Caco-2 (cell line): ENCODE measurements at regions of chr7 and their contacts with region 1.

Region 1: GRCh38 chr7:158704704-158705468 is at the start of gene NCAPG2:
- DNase-seq: peak; percentile 98
- H3K4me3 ChIP-seq: peak within 1 kb of the TSS; percentile 99
- H3K4me3 Mint-ChIP-seq: peak within 1 kb of the TSS; percentile 87
- H3K27ac Mint-ChIP-seq: peak within 1 kb of the TSS; percentile 88
- H3K4me1 ChIP-seq: peaks cover 12% of the 10 kb centered on the region
- H3K4me1 Mint-ChIP-seq: peaks cover 24% of the 10 kb centered on the region
- H3K27me3 ChIP-seq: no peaks in the 10 kb centered on the region
- H3K27me3 Mint-ChIP-seq: no peaks in the 10 kb centered on the region
- CTCF ChIP-seq: peak; percentile 11 to 20
- total RNA-seq, gene NCAPG2: 67.3 and 67.6 TPM in 2 replicates

Region 2: GRCh38 chr7:158350166-158350900 is 354.6 kb before region 1 on chr7:
- CTCF ChIA-PET with region 1: no interaction called
- POLR2A ChIA-PET with region 1: no interaction called
- intact Hi-C with region 1: no loop called
- DNase-seq: no peak
- H3K4me3 ChIP-seq: no peak overlapping the region
- H3K4me3 Mint-ChIP-seq: no peak overlapping the region
- H3K27ac Mint-ChIP-seq: no peak overlapping the region
- H3K4me1 ChIP-seq: no peaks in the 10 kb centered on the region
- H3K4me1 Mint-ChIP-seq: no peaks in the 10 kb centered on the region
- H3K27me3 ChIP-seq: no peaks in the 10 kb centered on the region
- H3K27me3 Mint-ChIP-seq: no peaks in the 10 kb centered on the region
- CTCF ChIP-seq: no peak

Region 3: GRCh38 chr7:158689488-158689887 is 15.4 kb before region 1 on chr7:
- CTCF ChIA-PET with region 1: no interaction called
- POLR2A ChIA-PET with region 1: interaction called, 12 read pairs
- intact Hi-C with region 1: no loop called
- DNase-seq: no peak
- H3K4me3 ChIP-seq: no peak overlapping the region
- H3K4me3 Mint-ChIP-seq: no peak overlapping the region
- H3K27ac Mint-ChIP-seq: no peak overlapping the region
- H3K4me1 ChIP-seq: no peaks in the 10 kb centered on the region
- H3K4me1 Mint-ChIP-seq: no peaks in the 10 kb centered on the region
- H3K27me3 ChIP-seq: no peaks in the 10 kb centered on the region
- H3K27me3 Mint-ChIP-seq: no peaks in the 10 kb centered on the region
- CTCF ChIP-seq: no peak

Region 4: GRCh38 chr7:158796542-158797066 is 91.7 kb after region 1 on chr7:
- CTCF ChIA-PET with region 1: no interaction called
- POLR2A ChIA-PET with region 1: no interaction called
- intact Hi-C with region 1: no loop called
- DNase-seq: no peak
- H3K4me3 ChIP-seq: no peak overlapping the region
- H3K4me3 Mint-ChIP-seq: no peak overlapping the region
- H3K27ac Mint-ChIP-seq: no peak overlapping the region
- H3K4me1 ChIP-seq: peaks cover 3% of the 10 kb centered on the region
- H3K4me1 Mint-ChIP-seq: peaks cover 6% of the 10 kb centered on the region
- H3K27me3 ChIP-seq: no peaks in the 10 kb centered on the region
- H3K27me3 Mint-ChIP-seq: no peaks in the 10 kb centered on the region
- CTCF ChIP-seq: no peak

Region 5: DNA sequence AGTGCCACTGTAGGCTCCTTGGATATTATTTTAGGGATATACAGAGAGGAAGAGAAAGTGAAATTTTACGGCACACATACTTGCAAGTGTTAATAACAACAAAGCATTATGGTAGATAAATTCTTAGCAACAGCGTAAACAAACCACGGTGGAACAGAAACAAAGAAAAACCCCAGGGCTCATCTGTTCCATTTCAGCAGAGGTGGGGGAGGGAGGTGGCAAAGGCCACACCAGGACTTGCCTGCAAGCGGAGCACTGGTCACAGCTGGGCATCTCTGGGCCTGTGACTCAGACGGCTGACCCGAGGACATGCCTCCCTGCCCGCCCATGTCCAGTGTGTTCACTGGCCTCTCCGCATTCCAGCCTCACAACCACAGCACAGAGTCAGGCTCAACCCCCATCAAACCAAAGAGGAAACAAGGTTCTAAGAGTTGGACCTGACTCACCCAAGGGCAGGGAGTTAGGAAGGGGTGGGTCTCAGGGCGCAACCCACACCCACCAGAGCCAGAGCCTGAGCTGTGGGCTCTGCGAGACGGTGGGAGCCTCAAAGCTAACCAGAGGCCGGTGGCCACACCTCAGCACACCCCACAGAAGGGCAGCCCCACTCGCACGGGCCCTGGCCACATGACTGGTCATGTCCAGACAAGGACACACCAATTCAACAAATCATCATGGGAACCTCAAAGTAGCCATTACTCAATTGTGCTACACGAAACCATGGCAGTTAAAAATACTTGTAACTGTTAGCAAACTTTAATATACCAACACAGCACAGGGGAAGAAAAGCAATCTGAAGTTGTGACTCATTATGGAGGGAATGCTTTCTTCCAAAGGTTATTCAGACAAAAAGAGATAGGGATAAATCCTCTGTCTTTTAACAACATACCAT is 113.7 kb after region 1 on chr7:
- CTCF ChIA-PET with region 1: no interaction called
- POLR2A ChIA-PET with region 1: interaction called, 4 read pairs
- intact Hi-C with region 1: loop called (anchors 5 kb)
- DNase-seq: peak; percentile 89 to 93
- H3K4me3 ChIP-seq: peak overlapping the region; percentile 6; the same call in 1 of the 2 replicates
- H3K4me3 Mint-ChIP-seq: peak overlapping the region; percentile 55
- H3K27ac Mint-ChIP-seq: peak overlapping the region; percentile 94
- H3K4me1 ChIP-seq: peaks cover 70% of the 10 kb centered on the region
- H3K4me1 Mint-ChIP-seq: peaks cover 71% of the 10 kb centered on the region
- H3K27me3 ChIP-seq: no peaks in the 10 kb centered on the region
- H3K27me3 Mint-ChIP-seq: no peaks in the 10 kb centered on the region
- CTCF ChIP-seq: no peak

Region 6: DNA sequence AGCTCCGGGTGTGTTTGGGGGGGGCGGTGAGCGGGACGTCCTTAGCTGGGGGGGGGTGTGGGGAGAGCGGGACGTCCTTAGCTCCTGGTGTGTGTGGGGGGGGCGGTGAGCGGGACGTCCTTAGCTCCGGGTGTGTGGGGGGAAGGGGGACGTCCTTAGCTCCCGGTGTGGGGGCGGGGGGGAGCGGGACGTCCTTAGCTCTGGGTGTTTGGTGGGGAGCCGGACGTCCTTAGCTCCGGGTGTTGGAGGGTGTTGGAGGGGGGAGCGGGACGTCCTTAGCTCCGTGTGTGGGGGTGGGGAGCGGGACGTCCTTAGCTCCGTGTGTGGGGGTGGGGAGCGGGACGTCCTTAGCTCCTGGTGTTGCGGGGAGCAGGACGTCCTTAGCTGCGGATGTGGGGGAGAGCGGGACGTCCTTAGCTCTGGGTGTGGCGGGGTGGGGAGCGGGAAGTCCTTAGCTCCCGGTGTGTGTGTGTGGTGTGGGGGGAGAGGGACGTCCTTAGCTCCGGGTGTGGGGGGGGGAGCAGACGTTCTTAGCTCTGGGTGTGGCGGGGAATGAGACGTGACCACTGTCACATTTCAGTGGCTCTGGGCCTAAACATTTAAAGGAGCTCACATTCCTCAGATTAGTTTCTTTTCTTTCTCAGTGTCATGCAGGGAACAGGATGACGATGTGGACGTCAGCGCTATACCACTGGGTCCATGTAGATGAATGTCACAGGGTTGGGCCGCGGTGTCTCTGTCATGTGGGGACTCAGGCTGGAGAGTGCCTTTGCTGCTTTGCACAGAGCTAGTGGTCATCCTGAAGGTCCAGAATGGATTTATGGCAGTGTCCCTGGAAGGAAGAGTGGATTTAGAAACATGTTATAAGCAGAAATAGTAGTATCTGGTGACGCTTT is 159.0 kb after region 1 on chr7:
- CTCF ChIA-PET with region 1: no interaction called
- POLR2A ChIA-PET with region 1: interaction called, 7 read pairs
- intact Hi-C with region 1: loop called (anchors 10 kb)
- DNase-seq: peak; percentile 41 to 78
- H3K4me3 ChIP-seq: peak overlapping the region; percentile 57
- H3K4me3 Mint-ChIP-seq: peak overlapping the region; percentile 89
- H3K27ac Mint-ChIP-seq: peak overlapping the region; percentile 95
- H3K4me1 ChIP-seq: peaks cover 14% of the 10 kb centered on the region
- H3K4me1 Mint-ChIP-seq: peaks cover 17% of the 10 kb centered on the region
- H3K27me3 ChIP-seq: no peaks in the 10 kb centered on the region
- H3K27me3 Mint-ChIP-seq: no peaks in the 10 kb centered on the region
- CTCF ChIP-seq: no peak